Naive thymus-derived CD4-positive, alpha-beta T cell (primary cell): ENCODE measurements at regions of chr12 and their contacts with region 1.

Region 1: DNA sequence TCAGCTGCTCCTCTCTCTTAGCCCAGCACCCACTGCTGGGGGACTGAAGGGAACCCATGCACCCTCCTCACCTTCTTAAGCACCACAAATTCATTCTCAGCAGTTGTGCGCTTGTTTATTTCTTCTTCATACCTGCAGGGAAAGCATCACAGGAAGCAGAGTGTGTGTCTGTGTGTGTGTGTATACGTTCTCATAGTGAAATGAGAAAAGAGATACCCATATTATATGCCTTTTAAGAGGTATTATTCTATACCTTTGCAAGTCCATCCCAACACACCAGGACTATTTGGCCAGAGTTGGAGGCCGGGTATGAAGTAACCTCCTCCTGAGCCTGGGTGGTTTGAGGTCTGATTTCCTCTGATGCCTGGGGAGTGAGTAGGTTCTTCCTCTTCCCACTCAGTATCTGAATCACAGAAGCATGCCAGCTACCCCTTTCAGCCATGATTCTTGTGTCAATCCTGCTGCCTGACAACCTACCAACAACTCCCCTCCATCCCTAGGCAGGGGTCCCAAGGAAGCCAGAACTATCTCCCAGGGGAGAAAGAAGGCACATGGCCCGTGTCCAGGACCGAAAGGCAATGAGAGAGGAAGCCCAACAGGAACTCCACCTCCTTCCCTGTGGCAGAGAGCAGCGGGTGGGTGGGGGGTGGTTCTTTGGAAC is 3.0 kb downstream of the KRT73 start:
- DNase-seq: peak in 6 of 9 donors; percentile 37 to 72 (median 64)
- ATAC-seq: peak; percentile 36
- H3K4me3 ChIP-seq: peak overlapping the region; percentile 5
- H3K4me3 Mint-ChIP-seq: peak overlapping the region; percentile 31 to 85 (median 64)
- H3K27ac ChIP-seq: peak overlapping the region; percentile 84
- H3K27ac Mint-ChIP-seq: peak overlapping the region; percentile 69 to 99 (median 97)
- H3K4me1 ChIP-seq: peaks cover 6 to 82% of the 10 kb centered on the region in 2 donors
- H3K4me1 Mint-ChIP-seq: peaks cover 54 to 97% (median 94%) of the 10 kb centered on the region in 7 donors
- H3K27me3 ChIP-seq: no peaks in the 10 kb centered on the region
- H3K27me3 Mint-ChIP-seq: peaks cover 0 to 8% (median 0%) of the 10 kb centered on the region in 5 donors

Region 2: GRCh38 chr12:52634266-52635056 is 19.1 kb after region 1 on chr12:
- CTCF ChIA-PET with region 1: interaction called, 15 read pairs
- POLR2A ChIA-PET with region 1: interaction called, 227 read pairs
- intact Hi-C with region 1: loop called in 1 of 2 experiments (anchors 2 kb)
- DNase-seq: peak in 1 of 9 donors; percentile 16
- ATAC-seq: no peak
- H3K4me3 ChIP-seq: no peak overlapping the region
- H3K4me3 Mint-ChIP-seq: peak overlapping the region in 9 of 10 donors; percentile 36 to 95 (median 60)
- H3K27ac ChIP-seq: no peak overlapping the region
- H3K27ac Mint-ChIP-seq: peak overlapping the region; percentile 50 to 96 (median 90)
- H3K4me1 ChIP-seq: peaks cover 19 to 59% of the 10 kb centered on the region in 2 donors
- H3K4me1 Mint-ChIP-seq: peaks cover 44 to 88% (median 67%) of the 10 kb centered on the region in 7 donors
- H3K27me3 ChIP-seq: peaks cover 0 to 3% of the 10 kb centered on the region in 2 donors
- H3K27me3 Mint-ChIP-seq: peaks cover 0 to 16% (median 0%) of the 10 kb centered on the region in 5 donors

Region 3: DNA sequence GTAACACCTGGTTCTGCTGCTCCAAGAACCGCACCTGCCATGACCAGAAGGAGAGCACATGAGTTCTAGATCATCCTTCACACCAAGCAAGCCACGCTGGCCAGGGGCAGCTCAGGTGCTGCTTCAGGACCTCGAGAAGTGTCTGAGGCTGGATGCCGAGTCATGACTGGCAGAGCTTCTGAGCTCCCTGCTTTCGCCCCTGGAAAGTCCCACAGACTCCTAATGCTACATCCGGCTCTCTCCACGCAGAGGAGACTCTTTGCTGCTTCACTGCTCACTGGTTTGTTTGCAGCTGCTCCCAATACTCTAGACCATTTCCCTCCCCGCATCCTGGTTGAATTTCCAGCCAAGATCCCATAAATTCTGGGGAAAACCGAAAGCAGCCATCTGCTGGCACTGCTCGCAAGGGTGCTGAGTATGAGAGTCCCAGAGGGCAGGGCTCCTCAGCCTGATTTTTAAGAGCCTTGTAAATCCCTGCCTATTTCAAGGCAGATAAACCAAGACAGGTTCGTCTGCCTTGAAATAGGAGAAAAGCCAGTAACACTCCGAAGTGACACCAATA is 35.3 kb after region 1 on chr12:
- CTCF ChIA-PET with region 1: interaction called, 21 read pairs
- POLR2A ChIA-PET with region 1: interaction called, 223 read pairs
- intact Hi-C with region 1: loop called (anchors 1 kb)
- DNase-seq: no peak
- ATAC-seq: no peak
- H3K4me3 ChIP-seq: no peak overlapping the region
- H3K4me3 Mint-ChIP-seq: peak overlapping the region in 2 of 10 donors; percentile 21 to 50
- H3K27ac ChIP-seq: no peak overlapping the region
- H3K27ac Mint-ChIP-seq: peak overlapping the region in 5 of 9 donors; percentile 26 to 100 (median 99)
- H3K4me1 ChIP-seq: peaks cover 17 to 39% of the 10 kb centered on the region in 2 donors
- H3K4me1 Mint-ChIP-seq: peaks cover 35 to 78% (median 62%) of the 10 kb centered on the region in 7 donors
- H3K27me3 ChIP-seq: no peaks in the 10 kb centered on the region
- H3K27me3 Mint-ChIP-seq: peaks cover 0 to 20% (median 0%) of the 10 kb centered on the region in 5 donors

Region 4: DNA sequence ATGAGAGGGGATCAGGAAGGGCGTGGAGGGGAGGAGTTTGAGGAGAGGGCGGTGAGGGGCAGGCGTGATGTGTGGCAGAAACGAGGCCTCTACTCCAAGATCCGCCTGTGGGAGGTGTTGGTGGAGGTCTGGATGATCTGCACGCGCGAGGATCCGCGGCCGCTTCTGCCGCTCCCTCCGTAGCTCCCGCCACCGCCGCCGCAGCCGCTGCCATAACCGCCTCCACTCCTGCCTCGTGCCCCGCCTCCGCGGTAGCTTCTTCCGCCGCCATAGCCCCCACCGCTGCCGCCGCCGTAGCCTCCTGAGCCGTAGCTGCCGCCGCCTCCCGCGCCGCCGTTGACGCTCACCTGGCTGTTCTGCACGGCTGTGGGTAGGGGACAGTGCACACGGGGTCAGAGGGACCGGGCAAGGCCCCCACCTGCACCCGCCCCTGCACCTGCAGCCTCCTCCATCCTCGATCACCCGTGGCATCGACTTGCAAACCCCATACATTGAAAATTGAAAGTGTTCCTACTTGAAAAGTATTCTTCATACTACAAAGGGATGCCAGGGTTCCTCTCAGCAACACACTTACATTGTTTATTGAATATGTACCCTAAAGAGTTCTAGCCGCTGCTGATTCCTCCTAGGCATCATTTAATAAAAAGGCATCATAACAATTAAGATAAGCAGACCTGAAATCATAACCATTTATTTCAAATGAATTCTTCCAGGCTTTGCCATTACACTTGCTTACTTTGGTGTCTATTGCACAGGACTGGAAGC is 75.9 kb after region 1 on chr12:
- CTCF ChIA-PET with region 1: interaction called, 12 read pairs
- POLR2A ChIA-PET with region 1: interaction called, 12 read pairs
- intact Hi-C with region 1: loop called in 1 of 2 experiments (anchors 1 kb)
- DNase-seq: peak; percentile 46 to 74 (median 71)
- ATAC-seq: peak; percentile 91
- H3K4me3 ChIP-seq: peak overlapping the region; percentile 50
- H3K4me3 Mint-ChIP-seq: peak overlapping the region; percentile 85 to 97 (median 91)
- H3K27ac ChIP-seq: peak overlapping the region; percentile 68
- H3K27ac Mint-ChIP-seq: peak overlapping the region in 8 of 9 donors; percentile 90 to 98 (median 97)
- H3K4me1 ChIP-seq: peaks cover 5 to 27% of the 10 kb centered on the region in 2 donors
- H3K4me1 Mint-ChIP-seq: peaks cover 8 to 63% (median 55%) of the 10 kb centered on the region in 7 donors
- H3K27me3 ChIP-seq: no peaks in the 10 kb centered on the region
- H3K27me3 Mint-ChIP-seq: peaks cover 0 to 79% (median 0%) of the 10 kb centered on the region in 5 donors

Region 5: GRCh38 chr12:52870351-52871290 is 255.3 kb after region 1 on chr12:
- CTCF ChIA-PET with region 1: interaction called, 15 read pairs
- POLR2A ChIA-PET with region 1: interaction called, 8 read pairs
- intact Hi-C with region 1: loop called in 1 of 2 experiments (anchors 1 kb)
- DNase-seq: peak; percentile 70 to 94 (median 82)
- ATAC-seq: peak; percentile 79
- H3K4me3 ChIP-seq: no peak overlapping the region
- H3K4me3 Mint-ChIP-seq: peak overlapping the region in 1 of 10 donors; percentile 29
- H3K27ac ChIP-seq: no peak overlapping the region
- H3K27ac Mint-ChIP-seq: peak overlapping the region in 8 of 9 donors; percentile 19 to 95 (median 74)
- H3K4me1 ChIP-seq: peaks cover 0 to 26% of the 10 kb centered on the region in 2 donors
- H3K4me1 Mint-ChIP-seq: peaks cover 29 to 56% (median 47%) of the 10 kb centered on the region in 7 donors
- H3K27me3 ChIP-seq: no peaks in the 10 kb centered on the region
- H3K27me3 Mint-ChIP-seq: peaks cover 0 to 13% (median 0%) of the 10 kb centered on the region in 5 donors

Region 6: DNA sequence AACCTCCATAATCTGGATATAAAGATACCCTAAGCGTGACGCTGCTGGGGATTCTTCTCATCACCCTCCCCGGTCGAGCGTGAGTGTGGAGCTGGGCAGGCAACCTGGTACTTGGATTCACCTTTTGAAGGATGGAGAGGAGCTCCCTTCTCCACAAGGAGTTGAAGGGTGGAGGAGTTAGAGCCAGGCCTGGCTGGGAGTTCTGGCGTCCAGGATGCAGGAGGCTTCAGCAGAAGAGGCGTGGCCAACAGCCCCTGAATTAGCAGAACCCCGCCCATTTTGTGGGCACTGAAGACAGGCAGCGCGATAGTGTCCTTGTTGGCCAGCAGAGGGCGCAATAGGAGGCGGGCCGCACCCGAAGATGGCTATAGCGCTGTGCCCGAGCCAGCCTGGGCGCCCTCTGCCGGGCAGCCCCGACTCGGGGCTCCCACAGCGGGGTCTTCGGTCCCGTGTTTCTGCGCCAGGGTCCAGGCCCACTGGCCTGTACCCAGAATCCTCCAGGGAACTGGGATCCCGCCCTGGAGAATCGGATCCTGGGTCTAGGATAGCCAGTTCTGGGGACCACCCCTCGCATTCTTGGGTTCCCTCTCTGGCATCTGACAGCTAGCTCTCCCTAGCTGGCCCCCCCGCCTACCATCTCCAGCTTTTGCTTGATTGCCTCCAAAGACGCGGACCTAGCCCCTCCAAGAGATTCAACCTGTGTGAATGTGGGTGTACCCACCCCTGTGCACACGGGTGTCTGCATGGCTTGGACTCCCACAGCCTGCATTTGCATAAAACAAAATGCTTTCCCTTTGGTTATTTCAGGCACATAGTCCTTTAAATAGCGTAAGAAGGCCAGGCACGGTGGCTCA is 1599.4 kb after region 1 on chr12:
- CTCF ChIA-PET with region 1: no interaction called
- POLR2A ChIA-PET with region 1: no interaction called
- intact Hi-C with region 1: loop called in 1 of 2 experiments (anchors 10 kb)
- DNase-seq: peak; percentile 80 to 90 (median 89)
- ATAC-seq: peak; percentile 95
- H3K4me3 ChIP-seq: peak overlapping the region; percentile 56
- H3K4me3 Mint-ChIP-seq: peak overlapping the region; percentile 72 to 93 (median 82)
- H3K27ac ChIP-seq: no peak overlapping the region
- H3K27ac Mint-ChIP-seq: peak overlapping the region in 2 of 9 donors; percentile 28 to 52
- H3K4me1 ChIP-seq: peaks cover 25 to 35% of the 10 kb centered on the region in 2 donors
- H3K4me1 Mint-ChIP-seq: peaks cover 18 to 52% (median 31%) of the 10 kb centered on the region in 7 donors
- H3K27me3 ChIP-seq: no peaks in the 10 kb centered on the region
- H3K27me3 Mint-ChIP-seq: peaks cover 0 to 40% (median 5%) of the 10 kb centered on the region in 5 donors